OCI-LY7 (cell line): ENCODE measurements at regions of chr10 and their contacts with region 1.

Region 1: GRCh38 chr10:23314835-23315239 is 29.8 kb downstream of the C10orf67 start:
- DNase-seq: peak; percentile 80
- H3K4me3 ChIP-seq: no peak overlapping the region
- H3K27ac ChIP-seq: no peak overlapping the region
- H3K4me1 ChIP-seq: no peaks in the 10 kb centered on the region
- CTCF ChIP-seq: peak; percentile 92

Region 2: DNA sequence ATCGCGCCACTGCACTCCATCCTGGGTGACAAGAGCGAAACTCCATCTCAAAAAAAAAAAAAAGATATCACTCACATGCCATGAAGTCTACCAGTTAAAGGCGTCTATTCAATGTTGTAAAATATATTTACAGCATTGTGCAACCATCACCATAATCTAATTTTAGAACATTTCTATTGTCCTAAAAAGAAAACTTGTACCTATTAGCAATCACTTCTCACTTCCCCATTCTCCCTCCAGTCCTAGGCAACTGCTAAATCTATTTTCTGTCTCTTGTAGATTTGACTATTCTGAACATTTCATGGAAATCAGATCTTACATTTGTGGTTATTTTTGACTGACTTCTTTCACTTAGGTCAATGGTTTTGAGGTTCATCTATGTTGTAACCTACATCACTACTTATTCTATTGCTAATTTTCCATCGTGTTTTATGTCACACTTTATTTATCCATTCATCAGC is 98.8 kb after region 1 on chr10:
- CTCF ChIA-PET with region 1: no interaction called
- POLR2A ChIA-PET with region 1: no interaction called
- intact Hi-C with region 1: loop called (anchors 10 kb)
- DNase-seq: peak; percentile 25
- H3K4me3 ChIP-seq: no peak overlapping the region
- H3K27ac ChIP-seq: no peak overlapping the region
- H3K4me1 ChIP-seq: peaks cover 9% of the 10 kb centered on the region
- CTCF ChIP-seq: no peak

Region 3: DNA sequence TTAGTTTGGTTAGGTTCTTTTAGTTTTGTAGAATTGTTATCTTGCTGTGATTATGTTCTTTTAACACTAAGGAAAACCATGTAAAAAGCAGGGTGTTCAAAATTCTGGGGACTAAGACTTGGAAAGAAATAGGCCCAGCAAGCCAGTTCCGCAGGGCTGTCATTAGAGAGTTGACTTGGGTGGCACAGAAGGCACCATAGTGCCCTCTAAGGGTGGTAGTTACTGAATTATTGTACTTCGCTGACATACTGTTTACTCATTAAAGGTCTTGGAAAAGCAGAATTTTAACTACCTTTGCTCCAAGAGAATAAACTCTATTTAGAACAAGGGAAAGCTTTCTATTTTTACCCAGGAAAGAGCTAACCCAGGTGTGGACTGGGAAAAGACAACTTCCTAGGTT is 210.6 kb after region 1 on chr10:
- CTCF ChIA-PET with region 1: no interaction called
- POLR2A ChIA-PET with region 1: interaction called, 3 read pairs
- intact Hi-C with region 1: loop called (anchors 1 kb)
- DNase-seq: peak; percentile 22
- H3K4me3 ChIP-seq: no peak overlapping the region
- H3K27ac ChIP-seq: no peak overlapping the region
- H3K4me1 ChIP-seq: peaks cover 14% of the 10 kb centered on the region
- CTCF ChIP-seq: peak; percentile 70

Region 4: DNA sequence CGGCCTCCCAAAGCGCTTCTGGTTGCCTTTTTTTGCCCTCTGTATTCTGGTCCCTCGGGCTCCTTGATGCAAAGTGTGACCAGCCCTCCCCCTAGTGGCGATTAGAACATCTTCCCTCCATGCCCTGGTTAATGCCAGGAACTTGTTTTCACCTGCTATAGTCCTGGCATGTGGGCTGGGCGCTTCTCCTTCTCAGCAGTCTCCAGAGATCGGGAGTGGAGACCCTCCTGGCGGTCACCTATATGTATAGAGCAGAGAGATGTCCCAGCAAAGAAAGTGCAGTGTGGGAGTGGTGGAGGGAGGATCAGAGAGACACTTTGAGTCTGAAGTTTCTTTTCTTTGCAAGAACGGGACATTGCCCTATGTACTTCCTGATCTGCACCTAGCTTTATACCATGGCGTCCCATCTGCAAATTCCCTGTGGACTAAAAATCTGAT is 388.2 kb after region 1 on chr10:
- CTCF ChIA-PET with region 1: no interaction called
- POLR2A ChIA-PET with region 1: no interaction called
- intact Hi-C with region 1: loop called (anchors 1 kb)
- DNase-seq: peak; percentile 72
- H3K4me3 ChIP-seq: no peak overlapping the region
- H3K27ac ChIP-seq: no peak overlapping the region
- H3K4me1 ChIP-seq: no peaks in the 10 kb centered on the region
- CTCF ChIP-seq: peak; percentile 79